CD14-positive monocyte (primary cell): ENCODE measurements at regions of chr2 and their contacts with region 1.

Region 1: GRCh38 chr2:241950413-241951315 is 81.1 kb downstream of the RTP5 start:
- DNase-seq: peak; percentile 29 to 58 (median 44)
- H3K4me3 ChIP-seq: no peak overlapping the region
- H3K4me3 Mint-ChIP-seq: no peak overlapping the region
- H3K27ac ChIP-seq: no peak overlapping the region
- H3K27ac Mint-ChIP-seq: no peak overlapping the region
- H3K4me1 ChIP-seq: no peaks in the 10 kb centered on the region
- H3K4me1 Mint-ChIP-seq: peaks cover 3% of the 10 kb centered on the region
- H3K27me3 ChIP-seq: no peaks in the 10 kb centered on the region
- H3K27me3 Mint-ChIP-seq: peaks cover 0 to 6% (median 3%) of the 10 kb centered on the region in 3 donors
- CTCF ChIP-seq: peak; percentile 92

Region 2: GRCh38 chr2:241933179-241933911 is 17.3 kb before region 1 on chr2:
- intact Hi-C with region 1: no loop called
- DNase-seq: no peak
- H3K4me3 ChIP-seq: no peak overlapping the region
- H3K4me3 Mint-ChIP-seq: no peak overlapping the region
- H3K27ac ChIP-seq: no peak overlapping the region
- H3K27ac Mint-ChIP-seq: no peak overlapping the region
- H3K4me1 ChIP-seq: no peaks in the 10 kb centered on the region
- H3K4me1 Mint-ChIP-seq: peaks cover 2% of the 10 kb centered on the region
- H3K27me3 ChIP-seq: no peaks in the 10 kb centered on the region
- H3K27me3 Mint-ChIP-seq: no peaks in the 10 kb centered on the region
- CTCF ChIP-seq: no peak

Region 3: DNA sequence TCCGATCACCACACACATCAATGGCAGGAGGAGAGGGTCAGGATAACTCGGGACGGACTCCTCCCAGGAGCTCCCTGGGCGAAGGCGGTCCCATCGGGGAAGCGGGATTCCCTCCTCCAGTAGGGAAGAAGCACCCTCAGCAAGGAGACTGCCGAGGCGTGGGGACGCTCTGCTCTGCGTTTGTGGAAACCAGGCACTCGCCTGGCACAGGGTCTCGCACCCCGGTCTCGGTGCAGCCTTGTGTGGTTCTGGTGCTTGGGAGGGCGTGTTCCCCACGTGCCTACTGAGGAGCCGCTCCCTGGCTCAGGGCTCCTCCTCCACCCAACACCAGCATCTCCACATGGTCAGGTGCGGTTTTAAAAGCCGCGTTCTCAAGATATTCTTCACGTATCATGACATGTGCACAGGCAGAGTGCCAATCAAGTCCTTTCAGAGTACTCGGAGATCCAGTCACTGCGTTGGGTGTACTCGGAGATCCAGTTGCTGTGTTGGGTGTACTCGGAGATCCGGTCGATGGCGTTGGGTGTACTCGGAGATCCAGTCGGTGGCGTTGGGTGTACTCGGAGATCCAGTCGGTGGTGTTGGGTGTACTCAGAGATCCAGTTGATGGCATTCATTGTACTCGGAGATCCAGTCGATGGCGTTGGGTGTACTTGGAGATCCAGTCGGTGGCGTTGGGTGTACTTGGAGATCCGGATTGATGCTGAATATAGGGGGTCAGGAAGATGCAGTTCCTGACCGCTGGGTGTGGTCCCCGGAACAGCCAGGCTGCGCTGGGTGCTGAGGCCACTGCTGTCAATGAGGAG is 36.4 kb after region 1 on chr2:
- intact Hi-C with region 1: loop called in 1 of 2 experiments (anchors 5 kb)
- DNase-seq: no peak
- H3K4me3 ChIP-seq: no peak overlapping the region
- H3K4me3 Mint-ChIP-seq: no peak overlapping the region
- H3K27ac ChIP-seq: no peak overlapping the region
- H3K27ac Mint-ChIP-seq: peak overlapping the region in 5 of 7 donors; percentile 5 to 31 (median 10)
- H3K4me1 ChIP-seq: peaks cover 12 to 17% of the 10 kb centered on the region in 2 donors
- H3K4me1 Mint-ChIP-seq: peaks cover 19% of the 10 kb centered on the region
- H3K27me3 ChIP-seq: no peaks in the 10 kb centered on the region
- H3K27me3 Mint-ChIP-seq: peaks cover 2 to 11% (median 8%) of the 10 kb centered on the region in 3 donors
- CTCF ChIP-seq: no peak